ENCODE measurements at regions of chr19 and their contacts with region 1.

Region 1: DNA sequence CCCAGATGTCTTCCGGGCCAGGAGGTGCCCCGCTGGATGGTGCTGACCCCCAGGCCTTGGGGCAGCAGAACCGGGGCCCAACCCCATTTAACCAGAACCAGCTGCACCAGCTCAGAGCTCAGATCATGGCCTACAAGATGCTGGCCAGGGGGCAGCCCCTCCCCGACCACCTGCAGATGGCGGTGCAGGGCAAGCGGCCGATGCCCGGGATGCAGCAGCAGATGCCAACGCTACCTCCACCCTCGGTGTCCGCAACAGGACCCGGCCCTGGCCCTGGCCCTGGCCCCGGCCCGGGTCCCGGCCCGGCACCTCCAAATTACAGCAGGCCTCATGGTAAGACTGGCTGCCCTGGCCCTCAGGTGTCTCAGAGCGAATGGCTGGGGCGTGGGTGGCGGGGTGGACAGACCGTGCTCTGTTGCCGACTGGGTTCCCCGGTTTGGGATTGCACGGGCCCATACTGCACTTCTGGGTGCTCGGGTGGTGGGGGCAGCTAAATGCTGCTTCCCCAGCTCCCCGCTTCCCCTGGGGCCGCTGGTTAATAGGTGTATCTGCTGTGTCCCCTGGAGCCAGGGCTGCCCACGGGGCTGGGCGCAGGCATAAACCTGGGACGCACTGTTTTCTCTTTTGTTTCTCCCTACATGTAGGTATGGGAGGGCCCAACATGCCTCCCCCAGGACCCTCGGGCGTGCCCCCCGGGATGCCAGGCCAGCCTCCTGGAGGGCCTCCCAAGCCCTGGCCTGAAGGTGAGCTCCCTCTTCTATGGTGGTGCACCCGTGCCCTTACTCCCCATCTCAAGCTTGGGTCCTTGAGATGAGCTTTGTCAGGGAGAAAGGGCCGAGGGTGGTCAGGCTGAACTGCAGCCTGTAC is 25.7 kb downstream of the SMARCA4 start:
- DNase-seq: no peak
- ATAC-seq: no peak
- H3K4me3 ChIP-seq: no peak overlapping the region
- H3K27ac ChIP-seq: no peak overlapping the region
- H3K4me1 ChIP-seq: no peaks in the 10 kb centered on the region
- H3K27me3 ChIP-seq: no peaks in the 10 kb centered on the region
- CTCF ChIP-seq: no peak

Region 2: DNA sequence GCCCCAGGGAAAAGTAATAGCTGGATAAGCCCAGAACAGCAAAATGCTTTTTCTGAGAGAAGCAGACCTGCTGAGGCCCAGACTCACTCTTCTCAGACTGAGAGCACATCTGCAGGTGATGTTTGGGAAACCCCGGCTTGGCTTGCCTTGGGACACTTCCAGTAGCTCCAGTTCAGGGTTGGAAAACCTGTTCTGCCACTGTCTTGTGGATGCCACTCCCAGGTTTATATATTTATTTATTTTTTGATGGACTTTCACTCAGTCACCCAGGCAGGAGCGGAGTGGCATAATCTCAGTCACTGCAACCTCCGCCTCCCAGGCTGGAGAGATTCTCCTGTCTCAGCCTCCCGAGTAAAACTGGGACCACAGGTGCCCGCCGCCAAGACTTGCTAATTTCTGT is 33.7 kb before region 1 on chr19:
- CTCF ChIA-PET with region 1: no interaction called
- POLR2A ChIA-PET with region 1: interaction called, 13 read pairs
- in situ Hi-C with region 1: no loop called
- intact Hi-C with region 1: no loop called
- DNase-seq: no peak
- ATAC-seq: no peak
- H3K4me3 ChIP-seq: no peak overlapping the region
- H3K27ac ChIP-seq: peak overlapping the region; percentile 19; the same call in 1 of the 2 replicates
- H3K4me1 ChIP-seq: no peaks in the 10 kb centered on the region
- H3K27me3 ChIP-seq: no peaks in the 10 kb centered on the region
- CTCF ChIP-seq: no peak

Region 3: GRCh38 chr19:10968527-10969135 is 17.9 kb before region 1 on chr19:
- CTCF ChIA-PET with region 1: no interaction called
- POLR2A ChIA-PET with region 1: no interaction called
- in situ Hi-C with region 1: no loop called
- intact Hi-C with region 1: no loop called
- DNase-seq: no peak
- ATAC-seq: no peak
- H3K4me3 ChIP-seq: no peak overlapping the region
- H3K27ac ChIP-seq: no peak overlapping the region
- H3K4me1 ChIP-seq: peaks cover 15% of the 10 kb centered on the region
- H3K27me3 ChIP-seq: no peaks in the 10 kb centered on the region
- CTCF ChIP-seq: no peak